ENCODE measurements at regions of chr15 and their contacts with region 1.

Region 1: GRCh38 chr15:92808978-92809879 is 90.9 kb upstream of the CHD2 start:
- DNase-seq: peak; percentile 99
- H3K4me3 Mint-ChIP-seq: peak overlapping the region; percentile 68
- H3K27ac Mint-ChIP-seq: peak overlapping the region; percentile 90
- H3K4me1 Mint-ChIP-seq: peaks cover 30% of the 10 kb centered on the region
- H3K27me3 Mint-ChIP-seq: no peaks in the 10 kb centered on the region
- CTCF ChIP-seq: peak; percentile 97

Region 2: GRCh38 chr15:92780843-92781242 is 28.4 kb before region 1 on chr15:
- CTCF ChIA-PET with region 1: no interaction called
- intact Hi-C with region 1: no loop called
- DNase-seq: no peak
- H3K4me3 Mint-ChIP-seq: no peak overlapping the region
- H3K27ac Mint-ChIP-seq: no peak overlapping the region
- H3K4me1 Mint-ChIP-seq: no peaks in the 10 kb centered on the region
- H3K27me3 Mint-ChIP-seq: no peaks in the 10 kb centered on the region
- CTCF ChIP-seq: no peak

Region 3: DNA sequence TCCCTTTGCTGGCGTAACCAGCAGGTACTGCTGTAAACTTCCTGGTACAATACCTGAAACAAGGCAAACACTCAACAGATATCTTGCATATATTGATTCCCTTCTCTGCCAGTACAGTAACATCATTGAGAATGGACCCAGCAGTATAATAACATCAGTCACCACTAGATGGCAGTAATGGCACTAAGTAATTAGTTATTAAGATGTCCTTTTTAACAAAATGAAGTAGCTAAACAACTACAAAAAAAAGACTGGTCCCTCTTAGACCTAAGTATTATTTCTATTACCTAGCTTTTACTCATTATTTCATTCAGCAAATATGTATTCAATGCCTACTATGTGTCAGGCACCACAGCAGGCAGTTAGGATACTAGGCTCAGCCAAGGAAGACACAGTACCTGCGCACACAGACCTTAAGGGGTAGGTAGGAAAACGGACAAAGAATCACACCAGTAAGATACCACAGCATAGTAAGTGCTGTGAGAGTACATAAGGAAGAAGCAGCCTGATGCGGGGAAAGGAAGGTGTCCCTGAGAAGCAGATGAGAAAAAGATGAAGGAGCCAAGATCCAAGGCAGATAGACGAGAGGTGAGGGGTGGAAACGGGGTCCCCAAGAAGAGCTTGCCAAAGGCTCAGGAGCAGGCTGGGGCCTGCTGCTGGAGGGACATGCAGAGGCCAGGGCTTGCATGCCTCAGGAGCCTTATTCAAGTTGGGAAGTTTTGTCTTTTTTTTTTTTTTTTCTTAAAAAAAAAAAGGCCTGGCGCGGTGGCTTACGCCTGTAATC is 11.9 kb before region 1 on chr15:
- CTCF ChIA-PET with region 1: interaction called, 19 read pairs
- intact Hi-C with region 1: no loop called
- DNase-seq: peak; percentile 79
- H3K4me3 Mint-ChIP-seq: no peak overlapping the region
- H3K27ac Mint-ChIP-seq: peak overlapping the region; percentile 24
- H3K4me1 Mint-ChIP-seq: peaks cover 23% of the 10 kb centered on the region
- H3K27me3 Mint-ChIP-seq: no peaks in the 10 kb centered on the region
- CTCF ChIP-seq: peak; percentile 31

Region 4: GRCh38 chr15:92831655-92832328 is 22.6 kb after region 1 on chr15:
- CTCF ChIA-PET with region 1: interaction called, 10 read pairs
- intact Hi-C with region 1: no loop called
- DNase-seq: peak; percentile 96
- H3K4me3 Mint-ChIP-seq: peak overlapping the region; percentile 62
- H3K27ac Mint-ChIP-seq: peak overlapping the region; percentile 99
- H3K4me1 Mint-ChIP-seq: peaks cover 32% of the 10 kb centered on the region
- H3K27me3 Mint-ChIP-seq: no peaks in the 10 kb centered on the region
- CTCF ChIP-seq: no peak

Region 5: DNA sequence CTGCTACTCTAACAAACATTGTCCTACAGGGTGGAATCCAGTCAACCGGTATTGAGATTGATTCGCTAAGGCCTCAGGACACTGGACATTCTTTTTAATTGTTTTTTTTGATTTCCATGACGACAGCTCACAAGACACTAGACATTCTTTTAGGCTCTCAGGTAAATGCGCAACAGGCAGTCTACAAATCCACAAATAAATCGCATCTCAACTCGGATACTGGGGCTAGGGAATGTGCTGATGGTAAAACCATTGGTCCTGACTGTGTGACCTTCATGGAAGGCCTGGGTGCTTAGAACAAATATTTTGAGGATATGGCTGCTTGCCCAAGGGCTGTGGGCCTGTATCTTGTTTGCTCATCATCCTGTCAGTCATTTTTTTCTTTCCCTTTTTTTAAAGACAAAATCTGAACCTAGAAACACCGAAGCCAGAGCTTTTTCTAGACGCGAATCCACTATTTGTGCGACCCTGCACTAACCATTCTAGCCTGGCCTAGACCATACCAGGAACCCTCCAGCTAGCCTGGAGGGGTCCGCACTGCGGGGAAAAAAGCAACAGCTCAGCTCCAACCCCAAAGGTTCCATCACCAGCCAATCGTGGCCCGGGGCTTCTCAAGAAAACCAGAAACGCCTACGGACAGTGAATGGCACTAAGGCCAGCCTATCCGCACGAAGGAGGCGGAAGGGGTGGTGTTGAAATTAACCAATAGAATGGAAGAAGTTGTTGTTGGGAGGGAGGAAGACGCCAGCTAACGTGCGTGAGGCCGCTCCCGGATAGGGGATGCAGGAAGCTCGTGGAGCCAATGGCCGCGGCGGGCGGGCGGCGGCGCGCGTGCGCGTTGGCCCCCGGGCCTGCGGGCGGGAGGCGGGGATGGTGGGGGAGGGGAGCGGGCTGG is 72.8 kb after region 1 on chr15:
- CTCF ChIA-PET with region 1: interaction called, 9 read pairs
- intact Hi-C with region 1: loop called (anchors 1 kb)
- DNase-seq: peak; percentile 98
- H3K4me3 Mint-ChIP-seq: peak overlapping the region; percentile 68
- H3K27ac Mint-ChIP-seq: peak overlapping the region; percentile 94
- H3K4me1 Mint-ChIP-seq: peaks cover 47% of the 10 kb centered on the region
- H3K27me3 Mint-ChIP-seq: peaks cover 13% of the 10 kb centered on the region
- CTCF ChIP-seq: no peak

Region 6: DNA sequence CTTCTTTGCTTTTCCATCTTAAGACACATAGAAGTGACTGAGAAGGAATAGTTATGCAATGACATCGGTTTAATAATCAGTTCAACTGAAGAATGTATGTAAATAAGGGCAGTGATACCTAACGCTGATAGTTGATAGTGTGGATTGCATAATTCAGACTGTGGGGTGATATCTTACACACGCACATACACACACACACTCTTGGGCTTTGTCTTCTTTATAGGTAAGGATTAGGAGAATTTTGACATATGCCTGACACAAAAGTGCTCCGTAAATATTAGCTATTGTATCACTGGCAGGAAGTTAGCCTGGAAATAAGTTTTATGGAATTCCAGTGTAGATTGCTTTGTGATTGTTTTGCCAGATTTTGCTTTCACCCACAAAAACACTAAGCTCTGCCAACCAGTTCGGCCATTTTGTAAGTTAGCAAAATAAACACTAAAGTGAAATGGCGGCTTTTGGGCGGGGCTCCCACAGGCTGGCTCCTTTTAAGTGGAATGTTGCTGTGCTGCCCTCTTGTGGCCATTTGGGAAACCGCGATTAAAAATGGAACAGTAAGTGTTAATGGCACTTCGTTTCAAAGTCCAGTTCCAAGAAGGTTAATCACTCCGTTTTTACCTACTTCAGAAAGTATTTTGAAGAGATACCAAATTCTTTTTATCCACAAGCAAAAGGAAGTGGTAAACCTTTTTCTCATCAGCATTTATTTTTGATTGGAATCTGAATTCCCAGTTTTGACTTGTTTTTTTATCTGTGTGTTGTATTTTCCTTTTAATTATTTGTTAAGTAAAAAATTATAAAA is 108.6 kb after region 1 on chr15:
- CTCF ChIA-PET with region 1: interaction called, 19 read pairs
- intact Hi-C with region 1: loop called (anchors 1 kb)
- DNase-seq: peak; percentile 93
- H3K4me3 Mint-ChIP-seq: peak overlapping the region; percentile 59
- H3K27ac Mint-ChIP-seq: peak overlapping the region; percentile 85
- H3K4me1 Mint-ChIP-seq: peaks cover 78% of the 10 kb centered on the region
- H3K27me3 Mint-ChIP-seq: no peaks in the 10 kb centered on the region
- CTCF ChIP-seq: peak; percentile 81

Measured in Calu3 (cell line).